Posterior cingulate gyrus (tissue), 11 donors: ENCODE measurements at regions of chr4 and their contacts with region 1.

Region 1: GRCh38 chr4:26607776-26608175 is 23.9 kb downstream of the TBC1D19 start:
- DNase-seq: no peak

Region 2: DNA sequence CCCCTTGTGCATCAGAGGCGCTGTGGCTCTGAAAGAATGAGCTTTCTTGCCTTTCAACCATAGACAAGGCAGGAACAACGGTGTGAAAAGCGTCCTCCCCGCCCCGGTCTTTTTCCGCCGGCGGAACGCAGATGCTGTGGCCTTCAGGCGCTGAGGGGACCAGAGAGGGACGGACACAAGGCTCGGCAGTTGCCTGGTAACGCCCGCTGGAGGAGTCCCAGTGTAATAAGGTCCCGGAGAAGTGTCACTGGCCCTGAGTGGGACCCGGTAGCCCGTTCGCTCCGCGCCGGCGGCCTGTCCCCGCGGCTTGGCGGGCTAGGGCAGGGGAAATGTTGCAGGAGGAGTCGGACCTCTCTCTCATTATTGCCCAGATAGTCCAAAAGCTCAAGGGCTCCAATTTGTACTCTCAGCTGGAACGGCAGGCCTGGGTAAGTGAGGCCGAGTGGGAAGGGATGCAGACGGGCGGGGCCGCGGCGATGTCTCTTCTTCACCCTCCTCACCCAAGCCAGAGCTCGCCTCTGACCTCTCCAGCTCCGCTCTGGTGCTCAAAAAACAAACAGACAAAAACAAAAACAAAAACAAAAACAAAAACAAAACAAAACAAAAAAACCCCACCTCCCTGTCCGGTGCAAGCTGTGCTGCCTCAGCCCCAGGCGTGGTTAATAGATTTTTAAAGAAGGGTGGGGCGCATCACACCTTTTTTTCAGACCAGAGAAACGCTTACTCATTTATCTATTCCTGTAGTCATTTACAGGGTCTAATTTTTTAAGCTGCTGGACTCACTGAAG is 23.7 kb before region 1 on chr4 and contains the start of gene TBC1D19:
- intact Hi-C with region 1: loop called (anchors 1 kb)
- DNase-seq: peak; percentile 86 to 98 (median 89)

Region 3: DNA sequence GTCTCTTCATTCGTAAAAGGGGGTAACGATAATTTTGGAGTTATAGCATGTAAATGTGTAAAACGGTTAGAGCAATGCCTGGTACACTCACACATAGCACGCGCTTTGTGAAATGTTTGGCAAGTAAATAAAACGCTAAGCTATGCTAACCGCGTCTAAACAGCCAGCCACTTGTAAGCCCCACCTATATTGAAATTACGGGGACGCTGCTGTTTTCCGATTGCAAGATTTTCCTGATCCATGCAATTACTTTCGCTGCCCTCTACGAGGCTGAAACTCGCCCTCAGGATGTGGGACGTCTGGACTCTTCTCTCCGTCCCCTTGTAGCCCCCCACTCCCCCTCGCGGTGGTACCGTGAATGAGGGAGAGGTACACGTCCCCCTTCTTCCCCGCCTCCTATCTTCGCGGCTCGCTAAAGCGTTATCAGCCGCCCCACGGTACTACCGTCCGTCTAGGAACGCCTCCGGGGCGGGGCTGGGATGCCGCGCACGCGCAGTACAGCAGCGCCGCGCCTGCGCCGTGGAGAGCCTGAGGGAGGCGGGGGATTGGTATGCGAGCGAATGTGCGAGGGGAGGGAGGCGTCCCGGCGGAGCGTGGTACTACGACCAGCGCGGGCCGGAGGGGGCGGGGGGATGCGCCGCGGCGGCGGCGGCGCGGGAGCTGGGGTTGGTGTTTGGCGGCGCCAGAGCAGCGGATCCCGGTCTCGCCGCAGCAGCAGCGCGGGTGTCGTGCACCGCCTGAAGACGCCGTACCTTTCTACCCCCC is 252.6 kb after region 1 on chr4 and contains the start of gene STIM2:
- intact Hi-C with region 1: no loop called
- DNase-seq: peak; percentile 92 to 99 (median 97)